Vagina (tissue), 2 donors: ENCODE measurements at regions of chr2 and their contacts with region 1.

Region 1: GRCh38 chr2:28661589-28662001 is 90.0 kb upstream of the PPP1CB start:
- DNase-seq: peak in 1 of 2 donors; percentile 95
- H3K4me3 ChIP-seq: no peak overlapping the region
- H3K27ac ChIP-seq: peak overlapping the region; percentile 86
- H3K4me1 ChIP-seq: peaks cover 71% of the 10 kb centered on the region
- H3K27me3 ChIP-seq: no peaks in the 10 kb centered on the region
- CTCF ChIP-seq: no peak
- POLR2A ChIP-seq: no peak

Region 2: DNA sequence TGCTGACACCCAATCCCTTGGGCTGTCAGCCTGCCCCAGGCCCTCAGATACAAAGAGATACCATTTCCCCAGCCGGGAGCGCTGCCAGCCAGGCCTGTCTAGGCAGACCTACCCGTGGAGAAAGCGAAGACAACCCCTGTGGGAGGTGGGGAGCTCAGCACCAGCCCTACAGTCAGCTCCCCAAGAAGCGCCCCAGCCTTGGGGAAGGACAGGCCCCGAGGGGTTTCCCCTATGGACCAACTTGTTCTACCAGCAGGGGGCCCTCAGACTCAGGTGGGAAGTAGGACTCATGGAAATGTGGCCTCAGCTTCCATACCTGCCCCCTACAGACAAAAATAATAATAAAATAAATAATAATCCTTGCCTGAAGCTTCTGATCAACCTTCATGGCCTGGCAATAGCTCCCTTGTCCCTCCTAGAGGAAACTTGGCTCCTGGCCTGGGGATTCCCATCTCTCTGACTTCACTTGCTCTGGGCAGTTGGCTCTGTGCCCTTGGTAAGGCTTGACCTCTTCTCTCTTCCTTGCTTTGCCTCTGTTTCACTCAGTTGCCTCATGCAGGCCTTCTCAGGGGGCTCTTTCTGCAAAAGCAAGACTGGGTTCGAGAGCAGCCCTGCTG is 1890.5 kb before region 1 on chr2:
- intact Hi-C with region 1: loop called (anchors 5 kb)
- DNase-seq: no peak
- H3K4me3 ChIP-seq: no peak overlapping the region
- H3K27ac ChIP-seq: peak overlapping the region; percentile 87
- H3K4me1 ChIP-seq: peaks cover 80% of the 10 kb centered on the region
- H3K27me3 ChIP-seq: no peaks in the 10 kb centered on the region
- CTCF ChIP-seq: no peak
- POLR2A ChIP-seq: no peak

Region 3: DNA sequence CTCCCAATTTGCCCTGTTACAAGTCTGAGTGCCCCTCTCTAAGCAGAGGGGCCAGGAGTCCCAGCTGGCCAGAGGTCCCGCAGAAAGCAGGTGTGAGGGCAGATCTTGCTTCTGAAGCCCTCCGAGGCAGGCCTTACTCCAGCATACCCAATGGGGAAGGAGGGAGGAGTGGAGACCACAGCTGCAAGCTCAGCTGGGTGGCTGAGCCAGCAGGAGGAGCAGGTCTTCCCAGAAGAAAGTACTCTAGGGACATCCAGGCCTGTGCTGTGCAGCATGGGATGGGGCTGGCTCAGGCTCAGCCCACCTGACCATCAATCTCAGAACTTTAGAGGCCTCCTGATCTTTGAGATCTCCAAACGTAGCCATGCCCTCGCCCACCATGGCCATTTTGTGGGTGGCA is 134.4 kb before region 1 on chr2:
- intact Hi-C with region 1: no loop called
- DNase-seq: no peak
- H3K4me3 ChIP-seq: no peak overlapping the region
- H3K27ac ChIP-seq: no peak overlapping the region
- H3K4me1 ChIP-seq: no peaks in the 10 kb centered on the region
- H3K27me3 ChIP-seq: no peaks in the 10 kb centered on the region
- CTCF ChIP-seq: no peak
- POLR2A ChIP-seq: no peak

Region 4: DNA sequence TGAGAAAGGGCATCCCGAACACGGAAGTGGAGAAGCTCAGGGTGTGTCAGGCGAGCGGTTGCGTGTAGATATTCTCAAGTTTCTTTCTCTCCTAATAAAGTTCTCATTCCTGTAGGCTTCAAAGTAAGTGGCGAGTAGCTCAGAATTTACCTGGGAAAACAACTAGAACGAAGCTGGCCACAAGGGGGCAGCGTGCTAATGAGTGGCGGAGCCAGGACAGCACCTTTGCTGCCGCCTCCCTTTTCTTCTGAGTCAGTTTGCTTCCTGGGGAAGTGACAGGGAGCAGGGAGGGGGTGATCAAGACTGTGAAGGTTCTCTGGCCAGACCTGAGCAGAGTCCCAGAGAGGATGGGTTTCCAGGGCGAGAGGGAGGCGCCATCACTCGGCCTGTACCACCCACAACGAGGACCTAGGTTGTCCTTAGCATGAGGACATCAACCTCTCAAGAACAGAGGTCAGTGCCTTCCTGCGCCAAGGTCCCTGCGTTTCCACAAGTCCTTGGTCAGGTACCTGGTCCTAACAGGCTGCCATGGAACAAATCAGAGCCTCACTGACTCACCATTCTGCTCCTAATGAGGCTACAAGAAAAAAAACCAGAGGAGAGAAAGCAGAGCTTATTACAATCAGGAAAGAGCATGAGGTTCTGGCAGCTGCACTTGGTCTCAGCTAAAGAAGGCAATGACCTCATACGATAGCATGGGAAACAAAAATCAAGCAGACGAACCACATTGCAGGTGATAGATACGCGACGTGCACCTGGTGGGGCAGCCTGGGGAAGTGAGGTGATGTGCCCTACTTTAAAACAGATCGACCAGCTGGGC is 67.1 kb before region 1 on chr2:
- intact Hi-C with region 1: loop called (anchors 5 kb)
- DNase-seq: no peak
- H3K4me3 ChIP-seq: no peak overlapping the region
- H3K27ac ChIP-seq: peak overlapping the region; percentile 71
- H3K4me1 ChIP-seq: no peaks in the 10 kb centered on the region
- H3K27me3 ChIP-seq: no peaks in the 10 kb centered on the region
- CTCF ChIP-seq: peak; percentile 66 to 94 (median 68)
- POLR2A ChIP-seq: no peak